Dendritic cell treated with granulocyte-macrophage colony-stimulating factor and Interleukin-4, amounts not matched to agents 40 ng/mL and 50 ng/mL, for 4 days (primary cell): ENCODE measurements at regions of chr5 and their contacts with region 1.

Region 1: GRCh38 chr5:136080483-136081216 is 51.9 kb downstream of the TGFBI start:
- H3K4me3 Mint-ChIP-seq: peak overlapping the region; percentile 53
- H3K27ac Mint-ChIP-seq: peak overlapping the region; percentile 34
- H3K4me1 Mint-ChIP-seq: peaks cover 26% of the 10 kb centered on the region
- H3K27me3 Mint-ChIP-seq: peaks cover 55% of the 10 kb centered on the region

Region 2: GRCh38 chr5:136115183-136115865 is 34.7 kb after region 1 on chr5:
- intact Hi-C with region 1: no loop called
- H3K4me3 Mint-ChIP-seq: no peak overlapping the region
- H3K27ac Mint-ChIP-seq: no peak overlapping the region
- H3K4me1 Mint-ChIP-seq: no peaks in the 10 kb centered on the region
- H3K27me3 Mint-ChIP-seq: peaks cover 8% of the 10 kb centered on the region

Region 3: DNA sequence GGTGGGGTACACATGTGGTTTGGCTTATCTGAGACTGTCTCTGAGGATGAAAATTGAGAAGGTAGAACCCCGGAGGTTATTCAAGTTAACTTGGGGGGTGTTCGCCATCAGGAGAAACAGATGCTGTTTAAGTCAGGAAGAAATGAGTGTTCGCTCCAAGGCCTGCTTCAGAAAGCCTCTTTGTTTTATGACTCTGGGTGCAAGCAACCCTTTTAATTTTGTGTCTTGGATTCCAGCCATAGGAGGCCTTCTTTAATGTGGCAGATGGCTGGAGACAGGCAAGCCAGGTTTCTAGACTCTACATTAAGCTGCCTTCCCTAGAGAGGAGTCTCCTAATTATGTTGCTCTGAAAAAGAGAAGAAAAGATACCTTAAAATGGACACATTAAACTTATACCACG is 47.8 kb after region 1 on chr5:
- intact Hi-C with region 1: loop called (anchors 2 kb)
- H3K4me3 Mint-ChIP-seq: no peak overlapping the region
- H3K27ac Mint-ChIP-seq: no peak overlapping the region
- H3K4me1 Mint-ChIP-seq: peaks cover 5% of the 10 kb centered on the region
- H3K27me3 Mint-ChIP-seq: peaks cover 42% of the 10 kb centered on the region

Region 4: GRCh38 chr5:136212252-136212721 is 131.6 kb after region 1 on chr5:
- intact Hi-C with region 1: loop called (anchors 10 kb)
- H3K4me3 Mint-ChIP-seq: no peak overlapping the region
- H3K27ac Mint-ChIP-seq: no peak overlapping the region
- H3K4me1 Mint-ChIP-seq: no peaks in the 10 kb centered on the region
- H3K27me3 Mint-ChIP-seq: peaks cover 23% of the 10 kb centered on the region